GM12878 (cell line): ENCODE measurements at regions of chr5 and their contacts with region 1.

Region 1: DNA sequence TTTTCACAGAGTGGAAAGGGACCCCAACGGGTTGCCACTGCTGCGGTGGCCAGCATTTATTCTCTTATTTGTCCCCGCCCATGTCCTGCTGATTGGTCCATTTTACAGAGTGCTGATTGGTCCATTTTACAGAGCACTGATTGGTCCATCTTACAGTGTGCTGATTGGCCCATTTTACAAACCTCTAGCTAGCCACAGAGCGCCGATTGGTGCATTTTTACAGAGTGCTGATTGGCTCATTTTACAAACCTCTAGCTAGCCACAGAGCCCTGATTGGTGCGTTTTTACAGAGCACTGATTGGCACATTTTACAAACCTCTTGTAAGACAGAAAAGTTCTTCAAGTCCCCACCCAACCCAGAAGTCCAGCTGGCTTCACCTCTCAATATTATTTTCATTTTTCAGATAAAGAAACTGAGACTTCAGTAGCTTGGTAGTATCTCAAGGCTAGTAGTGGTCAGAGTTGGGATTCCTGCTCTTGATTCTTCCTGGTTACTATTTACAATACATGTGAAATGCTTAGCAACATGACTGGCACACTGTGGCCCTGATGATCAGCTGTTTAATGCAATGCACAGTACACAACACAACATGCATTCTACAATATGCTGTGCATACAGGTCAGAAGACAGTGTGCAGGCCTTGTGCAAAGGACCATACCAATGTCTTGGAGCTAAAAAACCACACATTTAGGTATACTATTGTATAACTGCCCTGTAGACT is 63.6 kb upstream of the BOD1 start:
- DNase-seq: peak; percentile 47
- ATAC-seq: peak; percentile 84
- H3K4me3 ChIP-seq: no peak overlapping the region
- H3K27ac ChIP-seq: peak overlapping the region; percentile 72
- H3K4me1 ChIP-seq: peaks cover 22% of the 10 kb centered on the region
- H3K27me3 ChIP-seq: no peaks in the 10 kb centered on the region
- CTCF ChIP-seq: no peak
- EP300 ChIP-seq: no peak
- POLR2A ChIP-seq: no peak
- RAD21 ChIP-seq: no peak

Region 2: GRCh38 chr5:173625696-173626504 is 54.2 kb before region 1 on chr5:
- CTCF ChIA-PET with region 1: interaction called, 10 read pairs
- POLR2A ChIA-PET with region 1: no interaction called
- RAD21 ChIA-PET with region 1: no interaction called
- SMC1A ChIA-PET with region 1: interaction called, 4 read pairs
- in situ Hi-C with region 1: no loop called
- intact Hi-C with region 1: no loop called
- DNase-seq: no peak
- ATAC-seq: peak; percentile 81
- H3K4me3 ChIP-seq: no peak overlapping the region
- H3K27ac ChIP-seq: no peak overlapping the region
- H3K4me1 ChIP-seq: peaks cover 9% of the 10 kb centered on the region
- H3K27me3 ChIP-seq: no peaks in the 10 kb centered on the region
- CTCF ChIP-seq: peak; percentile 60 to 71 (median 61)
- EP300 ChIP-seq: no peak
- POLR2A ChIP-seq: no peak
- RAD21 ChIP-seq: peak; percentile 85

Region 3: GRCh38 chr5:173736923-173737412 is 56.9 kb after region 1 on chr5:
- CTCF ChIA-PET with region 1: no interaction called
- POLR2A ChIA-PET with region 1: interaction called, 5 read pairs
- RAD21 ChIA-PET with region 1: interaction called, 4 read pairs
- SMC1A ChIA-PET with region 1: interaction called, 11 read pairs
- in situ Hi-C with region 1: no loop called
- intact Hi-C with region 1: loop called (anchors 5 kb)
- DNase-seq: peak; percentile 76
- ATAC-seq: peak; percentile 91
- H3K4me3 ChIP-seq: peak overlapping the region; percentile 30; the same call in 1 of the 2 replicates
- H3K27ac ChIP-seq: peak overlapping the region; percentile 76
- H3K4me1 ChIP-seq: peaks cover 63% of the 10 kb centered on the region
- H3K27me3 ChIP-seq: no peaks in the 10 kb centered on the region
- CTCF ChIP-seq: no peak
- EP300 ChIP-seq: peak; percentile 47 to 49; a peak in 1 of 4 replicates
- POLR2A ChIP-seq: peak; percentile 48; the same call in 1 of the 2 replicates
- RAD21 ChIP-seq: 0 out of 2 replicates have a peak, but pooled peaks have one; percentile 10

Region 4: GRCh38 chr5:173745123-173745522 is 65.1 kb after region 1 on chr5:
- CTCF ChIA-PET with region 1: no interaction called
- POLR2A ChIA-PET with region 1: no interaction called
- RAD21 ChIA-PET with region 1: interaction called, 7 read pairs
- SMC1A ChIA-PET with region 1: interaction called, 12 read pairs
- in situ Hi-C with region 1: no loop called
- intact Hi-C with region 1: loop called (anchors 2 kb)
- DNase-seq: peak; percentile 47
- ATAC-seq: peak; percentile 64
- H3K4me3 ChIP-seq: no peak overlapping the region
- H3K27ac ChIP-seq: peak overlapping the region; percentile 95
- H3K4me1 ChIP-seq: peaks cover 54% of the 10 kb centered on the region
- H3K27me3 ChIP-seq: no peaks in the 10 kb centered on the region
- CTCF ChIP-seq: no peak
- EP300 ChIP-seq: no peak; a peak in 1 of 4 replicates
- POLR2A ChIP-seq: no peak
- RAD21 ChIP-seq: 0 out of 2 replicates have a peak, but pooled peaks have one; percentile 0